Activated CD4-positive, alpha-beta memory T cell treated with anti-CD3 and anti-CD28 coated beads for 36 hours (primary cell): ENCODE measurements at regions of chr1 and their contacts with region 1.

Region 1: GRCh38 chr1:76154206-76154956 is 79.8 kb downstream of the ST6GALNAC3 start:
- DNase-seq: peak; percentile 87
- H3K4me3 Mint-ChIP-seq: peak overlapping the region; percentile 74
- H3K27ac Mint-ChIP-seq: peak overlapping the region; percentile 58
- H3K4me1 Mint-ChIP-seq: peaks cover 2% of the 10 kb centered on the region
- H3K27me3 Mint-ChIP-seq: no peaks in the 10 kb centered on the region

Region 2: DNA sequence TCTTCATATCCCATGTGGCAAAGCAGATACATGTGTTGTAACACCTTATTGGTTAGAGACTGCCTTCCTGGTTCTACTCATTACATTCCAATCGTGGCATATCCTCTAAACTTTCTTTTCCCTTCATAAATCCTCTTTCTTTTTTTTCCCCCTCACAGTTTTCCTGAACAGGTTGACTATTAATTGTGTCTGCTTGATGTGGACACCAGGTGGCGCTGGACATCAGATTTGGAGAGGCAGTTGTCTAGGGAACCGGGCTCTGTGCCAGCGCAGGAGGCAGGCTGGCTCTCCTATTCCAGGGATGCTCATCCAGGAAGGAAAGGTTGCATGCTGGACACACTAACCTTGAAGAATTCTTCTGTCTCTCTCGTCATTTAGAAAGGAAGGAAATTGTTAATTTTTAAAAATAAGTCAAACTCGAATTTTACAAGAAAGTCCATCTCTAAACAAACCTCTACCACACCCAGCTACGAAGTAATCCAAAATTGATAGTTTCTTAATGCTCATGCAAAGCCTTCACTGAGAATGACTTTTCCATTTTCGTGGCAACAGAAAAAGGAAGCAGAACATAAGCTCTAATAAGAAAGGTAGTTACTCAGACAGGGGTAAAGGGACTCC is 162.8 kb before region 1 on chr1:
- CTCF ChIA-PET with region 1: interaction called, 3 read pairs
- POLR2A ChIA-PET with region 1: no interaction called
- intact Hi-C with region 1: loop called (anchors 1 kb)
- DNase-seq: peak; percentile 76
- H3K4me3 Mint-ChIP-seq: no peak overlapping the region
- H3K27ac Mint-ChIP-seq: no peak overlapping the region
- H3K4me1 Mint-ChIP-seq: no peaks in the 10 kb centered on the region
- H3K27me3 Mint-ChIP-seq: peaks cover 3% of the 10 kb centered on the region

Region 3: GRCh38 chr1:76219366-76219818 is 65.0 kb after region 1 on chr1:
- CTCF ChIA-PET with region 1: no interaction called
- POLR2A ChIA-PET with region 1: no interaction called
- intact Hi-C with region 1: no loop called
- DNase-seq: peak; percentile 13
- H3K4me3 Mint-ChIP-seq: no peak overlapping the region
- H3K27ac Mint-ChIP-seq: no peak overlapping the region
- H3K4me1 Mint-ChIP-seq: peaks cover 5% of the 10 kb centered on the region
- H3K27me3 Mint-ChIP-seq: peaks cover 3% of the 10 kb centered on the region

Region 4: GRCh38 chr1:76330991-76331603 is 176.7 kb after region 1 on chr1:
- CTCF ChIA-PET with region 1: interaction called, 5 read pairs
- POLR2A ChIA-PET with region 1: no interaction called
- intact Hi-C with region 1: loop called (anchors 1 kb)
- DNase-seq: peak; percentile 46
- H3K4me3 Mint-ChIP-seq: no peak overlapping the region
- H3K27ac Mint-ChIP-seq: no peak overlapping the region
- H3K4me1 Mint-ChIP-seq: peaks cover 7% of the 10 kb centered on the region
- H3K27me3 Mint-ChIP-seq: no peaks in the 10 kb centered on the region

Region 5: GRCh38 chr1:76713535-76713934 is 559.2 kb after region 1 on chr1:
- CTCF ChIA-PET with region 1: no interaction called
- POLR2A ChIA-PET with region 1: no interaction called
- intact Hi-C with region 1: loop called (anchors 10 kb)
- DNase-seq: no peak
- H3K4me3 Mint-ChIP-seq: no peak overlapping the region
- H3K27ac Mint-ChIP-seq: no peak overlapping the region
- H3K4me1 Mint-ChIP-seq: no peaks in the 10 kb centered on the region
- H3K27me3 Mint-ChIP-seq: peaks cover 3% of the 10 kb centered on the region

Region 6: GRCh38 chr1:77126307-77126706 is 971.9 kb after region 1 on chr1:
- CTCF ChIA-PET with region 1: interaction called, 6 read pairs
- POLR2A ChIA-PET with region 1: no interaction called
- intact Hi-C with region 1: loop called (anchors 1 kb)
- DNase-seq: no peak
- H3K4me3 Mint-ChIP-seq: no peak overlapping the region
- H3K27ac Mint-ChIP-seq: no peak overlapping the region
- H3K4me1 Mint-ChIP-seq: no peaks in the 10 kb centered on the region
- H3K27me3 Mint-ChIP-seq: no peaks in the 10 kb centered on the region

Region 7: DNA sequence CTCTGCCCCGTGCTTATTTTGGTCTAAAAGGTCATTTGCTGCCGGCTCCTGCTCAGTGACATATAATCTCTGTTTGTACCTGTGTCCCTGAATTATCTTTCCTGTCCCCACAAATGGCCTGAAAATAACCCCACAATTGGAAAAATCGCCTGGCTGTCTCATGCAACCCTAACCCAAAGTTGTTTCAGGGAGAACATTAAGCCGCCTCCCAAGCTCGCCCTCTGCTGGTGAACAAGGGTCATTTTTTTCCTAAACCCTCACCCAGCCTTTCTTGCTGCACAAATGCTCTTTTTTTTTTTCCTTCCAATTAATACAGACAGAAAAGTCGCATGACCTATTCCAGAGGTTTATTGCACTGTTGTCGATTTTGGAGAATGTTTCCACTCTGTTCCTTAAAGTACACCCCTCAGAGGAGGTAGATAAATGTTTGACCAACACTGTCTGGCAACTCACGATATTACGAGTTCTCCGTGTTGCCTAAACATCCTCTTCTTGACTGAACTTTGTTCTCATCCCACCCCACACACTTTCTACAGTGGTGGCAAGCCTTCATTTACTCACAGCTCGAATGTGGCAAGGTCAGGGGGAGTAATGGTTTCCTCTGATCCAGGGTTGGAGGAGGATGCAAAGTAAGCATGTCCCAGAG is 1379.4 kb after region 1 on chr1:
- CTCF ChIA-PET with region 1: interaction called, 3 read pairs
- POLR2A ChIA-PET with region 1: no interaction called
- intact Hi-C with region 1: loop called (anchors 1 kb)
- DNase-seq: peak; percentile 66
- H3K4me3 Mint-ChIP-seq: no peak overlapping the region
- H3K27ac Mint-ChIP-seq: no peak overlapping the region
- H3K4me1 Mint-ChIP-seq: peaks cover 4% of the 10 kb centered on the region
- H3K27me3 Mint-ChIP-seq: no peaks in the 10 kb centered on the region